ENCODE measurements at regions of chrX and their contacts with region 1.

Region 1: DNA sequence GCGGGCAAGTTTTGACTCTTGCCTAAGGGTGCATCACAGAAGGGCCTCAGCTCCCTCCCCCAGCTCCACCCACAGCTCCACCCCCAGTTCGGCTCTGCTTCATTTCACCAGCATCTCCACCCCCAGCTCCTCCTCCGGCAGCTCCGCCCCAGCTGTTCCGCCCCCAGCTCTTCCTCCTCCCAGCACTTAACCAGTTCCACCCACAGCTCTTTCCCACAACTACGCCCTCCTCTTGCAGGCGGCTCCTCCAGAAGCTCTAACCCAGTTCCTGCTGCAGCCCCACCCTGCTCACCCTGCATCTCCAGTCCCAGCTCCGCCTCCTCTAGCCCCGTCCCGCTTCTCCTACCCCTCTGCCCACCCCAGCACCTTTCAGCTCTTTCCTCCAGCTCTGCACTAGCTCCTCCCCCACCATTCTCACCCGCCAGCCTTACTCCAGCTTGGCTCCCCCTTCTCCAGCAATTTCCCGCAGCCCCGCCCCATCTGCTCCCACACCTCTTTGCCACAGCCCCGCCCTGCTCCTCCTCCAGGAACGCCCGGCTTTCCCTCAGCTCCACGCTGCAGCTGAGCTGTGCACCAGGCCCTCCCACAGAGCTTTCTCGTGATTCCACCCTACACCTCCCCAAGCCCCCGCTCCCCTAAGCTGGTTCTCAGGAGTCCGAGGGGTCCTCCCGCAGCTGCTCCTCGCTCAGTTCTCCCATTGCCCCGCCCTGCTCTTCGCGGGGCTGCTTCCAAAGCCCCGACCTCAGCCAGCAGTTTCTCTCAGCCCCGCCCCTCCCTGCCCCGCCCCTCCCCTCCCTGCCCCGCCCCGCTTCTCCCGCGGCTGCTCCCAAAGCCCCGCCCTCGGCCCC is 1.3 kb upstream of the EOLA1 start:
- DNase-seq: peak; percentile 60 to 93 (median 87)
- ATAC-seq: peak; percentile 49 to 60 (median 56)
- H3K4me3 ChIP-seq: peak overlapping the region; percentile 62
- H3K4me3 Mint-ChIP-seq: peak overlapping the region; percentile 80 to 83 (median 80)
- H3K27ac ChIP-seq: peak overlapping the region; percentile 84
- H3K27ac Mint-ChIP-seq: peak overlapping the region; percentile 87
- H3K4me1 ChIP-seq: peaks cover 3 to 16% of the 10 kb centered on the region in 2 experiments
- H3K4me1 Mint-ChIP-seq: peaks cover 0 to 10% (median 8%) of the 10 kb centered on the region in 3 donors
- H3K27me3 ChIP-seq: no peaks in the 10 kb centered on the region
- H3K27me3 Mint-ChIP-seq: no peaks in the 10 kb centered on the region

Region 2: DNA sequence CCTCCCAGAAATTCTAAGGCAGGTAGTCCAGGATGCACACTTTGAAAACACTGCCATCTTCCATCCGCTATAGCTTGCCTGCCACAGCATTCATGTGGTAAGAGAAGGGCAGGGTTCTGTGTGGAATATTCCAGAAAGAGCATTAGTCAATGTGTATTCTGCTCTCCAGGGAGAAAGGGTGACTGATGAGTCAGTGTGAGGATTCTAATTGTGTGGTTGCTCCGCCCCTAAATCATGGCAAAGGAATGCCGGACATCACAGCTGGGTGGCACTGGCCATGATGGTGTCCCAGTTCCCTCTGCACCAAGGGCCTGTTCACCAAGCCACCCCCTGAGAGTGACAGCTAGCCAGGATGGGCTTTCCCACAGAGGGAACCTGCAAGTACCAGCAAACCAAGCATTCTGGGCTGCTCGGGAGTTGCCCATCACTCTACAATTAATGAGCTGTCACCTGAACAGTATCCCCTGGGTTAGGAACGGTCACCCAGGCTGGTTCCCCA is 43.9 kb before region 1 on chrX:
- CTCF ChIA-PET with region 1: interaction called in 1 of 2 experiments, 4 read pairs
- POLR2A ChIA-PET with region 1: interaction called in 1 of 2 experiments, 111 read pairs
- DNase-seq: no peak
- ATAC-seq: no peak
- H3K4me3 ChIP-seq: no peak overlapping the region
- H3K4me3 Mint-ChIP-seq: no peak overlapping the region
- H3K27ac ChIP-seq: no peak overlapping the region
- H3K27ac Mint-ChIP-seq: no peak overlapping the region
- H3K4me1 ChIP-seq: peaks cover 0 to 4% of the 10 kb centered on the region in 2 experiments
- H3K4me1 Mint-ChIP-seq: peaks cover 5 to 22% (median 13%) of the 10 kb centered on the region in 3 donors
- H3K27me3 ChIP-seq: no peaks in the 10 kb centered on the region
- H3K27me3 Mint-ChIP-seq: no peaks in the 10 kb centered on the region

Region 3: DNA sequence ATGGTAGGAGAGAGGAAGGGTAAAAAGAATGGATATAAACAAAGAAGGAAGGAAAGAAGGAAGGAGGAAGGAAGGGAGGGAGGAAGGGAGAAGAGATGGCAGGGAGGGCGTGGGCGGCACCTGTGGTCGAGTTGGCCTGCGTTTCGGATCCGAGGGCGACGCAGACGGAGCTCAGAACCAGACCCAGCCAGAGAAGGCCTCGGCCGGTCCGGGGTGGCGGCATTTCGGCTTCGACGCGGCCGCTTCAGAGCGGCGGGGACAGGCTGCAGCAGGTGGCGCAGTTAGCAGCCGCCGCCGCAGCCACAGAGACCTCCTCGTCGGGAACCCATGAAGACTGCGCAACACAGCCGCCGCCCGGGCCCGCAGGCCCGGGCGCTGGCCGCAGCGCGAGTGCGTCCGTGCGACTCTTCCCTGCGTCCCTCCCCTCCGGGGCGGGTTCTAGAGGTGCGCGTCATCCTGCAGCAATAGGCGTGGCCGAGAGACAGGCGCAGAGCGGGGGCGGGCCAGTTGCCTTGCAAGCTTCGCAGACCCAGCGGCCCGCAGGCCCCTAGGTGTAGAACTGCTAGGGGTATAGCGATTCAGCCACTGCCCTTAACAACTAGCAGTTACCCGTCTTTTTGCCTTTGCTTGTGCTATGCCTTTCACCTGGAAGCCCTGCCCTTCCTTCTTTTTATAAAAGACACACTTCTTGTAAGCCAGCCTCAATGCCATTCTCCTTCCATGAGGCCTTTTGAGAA is 34.4 kb before region 1 on chrX and contains the start of gene IDS:
- CTCF ChIA-PET with region 1: interaction called in 1 of 2 experiments, 20 read pairs
- POLR2A ChIA-PET with region 1: interaction called, 4 to 111 read pairs
- DNase-seq: peak; percentile 62 to 90 (median 82)
- ATAC-seq: peak; percentile 79 to 83 (median 80)
- H3K4me3 ChIP-seq: peak within 1 kb of the TSS; percentile 46 to 91
- H3K4me3 Mint-ChIP-seq: peak within 1 kb of the TSS; percentile 79 to 96 (median 88)
- H3K27ac ChIP-seq: peak within 1 kb of the TSS; percentile 98
- H3K27ac Mint-ChIP-seq: peak within 1 kb of the TSS; percentile 88 to 95
- H3K4me1 ChIP-seq: peaks cover 2 to 35% of the 10 kb centered on the region in 2 experiments
- H3K4me1 Mint-ChIP-seq: peaks cover 24 to 40% (median 31%) of the 10 kb centered on the region in 3 donors
- H3K27me3 ChIP-seq: peaks cover 0 to 6% of the 10 kb centered on the region in 2 experiments
- H3K27me3 Mint-ChIP-seq: peaks cover 0 to 14% of the 10 kb centered on the region in 2 donors
- total RNA-seq, gene IDS: 152 to 402 (median 182) TPM

Region 4: DNA sequence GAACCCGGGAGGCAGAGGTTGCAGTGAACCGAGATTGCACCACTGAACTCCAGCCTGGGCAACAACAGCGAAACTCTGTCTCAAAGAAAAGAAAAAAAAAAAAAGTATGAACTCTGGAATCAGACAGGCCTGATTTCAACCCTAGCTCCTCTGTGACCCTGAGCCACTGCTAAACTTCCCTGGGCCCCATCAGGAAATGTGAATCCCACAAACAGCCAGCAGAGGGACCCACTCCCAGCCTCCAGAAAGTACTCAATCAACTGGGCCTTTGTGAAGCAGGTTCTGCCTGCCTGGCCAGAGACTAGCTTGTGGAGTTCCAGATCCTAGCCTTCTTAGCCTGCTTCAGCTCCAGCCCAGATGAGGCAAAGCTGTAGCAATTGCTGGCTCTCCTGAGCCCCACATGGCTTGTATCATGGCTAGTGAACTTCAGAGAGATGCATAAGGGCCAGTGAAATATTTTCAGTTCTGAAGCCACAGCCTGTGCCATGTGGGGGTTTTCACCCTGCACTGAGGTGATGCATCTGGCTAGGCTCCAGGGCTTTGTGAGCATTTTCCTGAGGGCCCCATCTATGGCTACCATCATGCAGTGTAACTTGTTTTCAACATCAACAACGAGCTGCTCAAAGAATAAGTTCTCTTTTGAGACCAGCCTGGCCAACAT is 27.2 kb before region 1 on chrX:
- CTCF ChIA-PET with region 1: interaction called, 3 to 41 read pairs
- POLR2A ChIA-PET with region 1: interaction called in 1 of 2 experiments, 9 read pairs
- DNase-seq: peak in 32 of 35 experiments; percentile 14 to 78 (median 47)
- ATAC-seq: peak; percentile 78 to 86 (median 82)
- H3K4me3 ChIP-seq: no peak overlapping the region
- H3K4me3 Mint-ChIP-seq: no peak overlapping the region
- H3K27ac ChIP-seq: peak overlapping the region; percentile 44
- H3K27ac Mint-ChIP-seq: peak overlapping the region; percentile 69 to 85
- H3K4me1 ChIP-seq: peaks cover 5 to 39% of the 10 kb centered on the region in 2 experiments
- H3K4me1 Mint-ChIP-seq: peaks cover 10 to 31% (median 11%) of the 10 kb centered on the region in 3 donors
- H3K27me3 ChIP-seq: peaks cover 0 to 6% of the 10 kb centered on the region in 2 experiments
- H3K27me3 Mint-ChIP-seq: peaks cover 0 to 25% of the 10 kb centered on the region in 2 donors

Region 5: GRCh38 chrX:149521438-149521837 is 18.1 kb before region 1 on chrX:
- CTCF ChIA-PET with region 1: interaction called in 1 of 2 experiments, 4 read pairs
- POLR2A ChIA-PET with region 1: interaction called, 6 to 26 read pairs
- DNase-seq: peak in 14 of 35 experiments; percentile 6 to 64 (median 18)
- ATAC-seq: peak in 3 of 4 experiments; percentile 18 to 46 (median 23)
- H3K4me3 ChIP-seq: no peak overlapping the region
- H3K4me3 Mint-ChIP-seq: peak overlapping the region in 2 of 3 donors; percentile 29 to 73
- H3K27ac ChIP-seq: peak overlapping the region; percentile 69
- H3K27ac Mint-ChIP-seq: peak overlapping the region; percentile 66 to 89
- H3K4me1 ChIP-seq: peaks cover 5 to 45% of the 10 kb centered on the region in 2 experiments
- H3K4me1 Mint-ChIP-seq: peaks cover 29 to 57% (median 42%) of the 10 kb centered on the region in 3 donors
- H3K27me3 ChIP-seq: no peaks in the 10 kb centered on the region
- H3K27me3 Mint-ChIP-seq: peaks cover 0 to 11% of the 10 kb centered on the region in 2 donors

Region 6: DNA sequence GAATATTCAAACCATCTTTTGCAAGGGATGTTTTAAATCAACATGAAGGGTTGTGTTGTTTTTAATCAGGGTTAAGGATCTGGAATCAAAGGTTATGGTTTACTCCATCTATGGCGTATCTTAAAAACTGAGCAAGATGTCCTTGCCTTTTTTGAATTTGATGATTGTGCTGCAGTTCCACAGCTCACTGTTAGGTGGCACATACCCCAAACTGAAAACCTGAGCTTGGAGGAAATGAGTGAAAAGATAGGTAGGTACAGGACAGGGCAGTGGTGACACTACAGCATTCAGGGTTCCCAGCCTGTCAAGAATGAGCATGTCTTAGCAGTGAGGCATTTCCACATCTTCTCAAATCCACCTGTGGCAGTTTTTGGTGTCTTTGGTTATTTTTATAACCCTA is 11.8 kb before region 1 on chrX:
- CTCF ChIA-PET with region 1: interaction called in 1 of 2 experiments, 23 read pairs
- POLR2A ChIA-PET with region 1: interaction called, 6 to 26 read pairs
- DNase-seq: peak in 14 of 35 experiments; percentile 11 to 65 (median 30)
- ATAC-seq: peak in 1 of 4 experiments; percentile 32
- H3K4me3 ChIP-seq: no peak overlapping the region
- H3K4me3 Mint-ChIP-seq: no peak overlapping the region
- H3K27ac ChIP-seq: no peak overlapping the region
- H3K27ac Mint-ChIP-seq: peak overlapping the region; percentile 50 to 87
- H3K4me1 ChIP-seq: peaks cover 2 to 36% of the 10 kb centered on the region in 2 experiments
- H3K4me1 Mint-ChIP-seq: peaks cover 5 to 37% (median 27%) of the 10 kb centered on the region in 3 donors
- H3K27me3 ChIP-seq: no peaks in the 10 kb centered on the region
- H3K27me3 Mint-ChIP-seq: peaks cover 0 to 6% of the 10 kb centered on the region in 2 donors

Region 7: DNA sequence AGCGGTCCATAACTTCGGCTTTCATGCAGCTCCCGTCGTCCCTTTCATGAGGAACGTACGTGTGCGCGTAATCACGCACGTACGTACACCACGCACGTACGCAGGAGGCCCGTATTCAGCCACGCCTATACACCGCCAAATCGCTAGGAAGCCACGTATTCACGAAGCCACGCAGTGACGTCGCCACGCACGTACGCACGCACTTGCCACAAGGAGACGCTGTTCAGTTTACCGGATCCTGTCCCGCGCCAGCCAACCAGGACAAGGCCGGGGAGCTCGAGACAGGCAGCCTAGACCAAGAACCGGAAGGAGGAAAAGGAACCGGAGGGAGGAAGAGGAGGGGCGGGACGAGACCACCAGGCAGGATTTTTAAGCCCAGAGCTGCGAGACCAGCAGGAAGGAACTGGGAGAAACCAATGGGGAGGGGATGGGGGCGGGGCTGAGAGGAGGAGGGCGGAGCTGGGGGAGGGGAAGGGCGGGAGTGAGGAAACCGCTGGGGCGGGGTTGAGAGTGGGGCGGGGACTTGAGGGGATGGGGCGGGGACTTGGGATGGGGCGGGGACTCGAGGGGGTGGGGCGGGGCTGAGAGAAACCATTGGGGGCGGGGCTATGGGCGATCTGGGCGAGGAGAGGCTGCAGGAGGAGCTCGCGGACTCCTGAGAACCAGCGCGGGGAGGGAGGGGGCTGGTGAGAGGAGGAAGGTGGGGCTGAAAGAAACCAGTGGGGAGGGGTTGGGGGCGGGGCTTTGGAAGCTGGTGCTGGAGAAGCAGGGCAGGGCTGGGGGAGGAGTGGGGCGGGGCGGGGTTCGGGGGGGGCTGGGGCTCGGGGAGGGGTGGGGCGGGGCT is 399.1 kb after region 1 on chrX and contains the start of gene EOLA2:
- CTCF ChIA-PET with region 1: interaction called in 1 of 2 experiments, 64 read pairs
- POLR2A ChIA-PET with region 1: interaction called, 15 to 91 read pairs
- DNase-seq: peak; percentile 82 to 97 (median 92)
- ATAC-seq: peak; percentile 54 to 66 (median 58)
- H3K4me3 ChIP-seq: peak within 1 kb of the TSS; percentile 50 to 92
- H3K4me3 Mint-ChIP-seq: peak within 1 kb of the TSS; percentile 91 to 93 (median 92)
- H3K27ac ChIP-seq: peak within 1 kb of the TSS; percentile 98
- H3K27ac Mint-ChIP-seq: peak within 1 kb of the TSS; percentile 99 to 100
- H3K4me1 ChIP-seq: peaks cover 0 to 13% of the 10 kb centered on the region in 2 experiments
- H3K4me1 Mint-ChIP-seq: peaks cover 7 to 10% (median 9%) of the 10 kb centered on the region in 3 donors
- H3K27me3 ChIP-seq: no peaks in the 10 kb centered on the region
- H3K27me3 Mint-ChIP-seq: no peaks in the 10 kb centered on the region
- total RNA-seq, gene EOLA2: 43.2 to 58.7 (median 48.5) TPM

Measured in T-cell (primary cell).